Activated CD4-positive, alpha-beta memory T cell treated with anti-CD3 and anti-CD28 coated beads, Interleukin-2, amount 10 ng/mL, durations not matched to agents 7 days and 5 days (primary cell): ENCODE measurements at regions of chr2 and their contacts with region 1.

Region 1: DNA sequence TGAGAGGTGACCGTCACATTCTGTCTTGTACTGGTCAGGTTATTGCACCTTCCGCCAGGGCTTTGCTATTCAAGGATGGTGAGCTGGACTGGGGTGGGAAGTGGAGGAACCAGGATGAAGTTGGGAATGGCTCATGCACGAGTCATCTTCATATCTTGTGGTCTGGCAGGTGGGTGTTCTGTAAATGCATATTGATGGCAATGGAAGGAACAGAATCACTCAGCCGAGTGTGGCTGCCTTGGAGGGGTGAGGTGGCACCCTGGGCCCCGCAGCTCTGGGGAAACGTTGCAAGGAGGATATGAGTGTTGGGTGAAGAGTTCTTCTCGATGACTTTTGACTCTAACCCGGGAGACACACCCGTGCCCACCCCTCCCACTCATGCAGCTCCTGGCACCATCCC is 1.2 kb downstream of the NEU2 start:
- DNase-seq: no peak
- H3K4me3 Mint-ChIP-seq: no peak overlapping the region
- H3K27ac Mint-ChIP-seq: no peak overlapping the region
- H3K4me1 Mint-ChIP-seq: no peaks in the 10 kb centered on the region
- H3K27me3 Mint-ChIP-seq: no peaks in the 10 kb centered on the region

Region 2: DNA sequence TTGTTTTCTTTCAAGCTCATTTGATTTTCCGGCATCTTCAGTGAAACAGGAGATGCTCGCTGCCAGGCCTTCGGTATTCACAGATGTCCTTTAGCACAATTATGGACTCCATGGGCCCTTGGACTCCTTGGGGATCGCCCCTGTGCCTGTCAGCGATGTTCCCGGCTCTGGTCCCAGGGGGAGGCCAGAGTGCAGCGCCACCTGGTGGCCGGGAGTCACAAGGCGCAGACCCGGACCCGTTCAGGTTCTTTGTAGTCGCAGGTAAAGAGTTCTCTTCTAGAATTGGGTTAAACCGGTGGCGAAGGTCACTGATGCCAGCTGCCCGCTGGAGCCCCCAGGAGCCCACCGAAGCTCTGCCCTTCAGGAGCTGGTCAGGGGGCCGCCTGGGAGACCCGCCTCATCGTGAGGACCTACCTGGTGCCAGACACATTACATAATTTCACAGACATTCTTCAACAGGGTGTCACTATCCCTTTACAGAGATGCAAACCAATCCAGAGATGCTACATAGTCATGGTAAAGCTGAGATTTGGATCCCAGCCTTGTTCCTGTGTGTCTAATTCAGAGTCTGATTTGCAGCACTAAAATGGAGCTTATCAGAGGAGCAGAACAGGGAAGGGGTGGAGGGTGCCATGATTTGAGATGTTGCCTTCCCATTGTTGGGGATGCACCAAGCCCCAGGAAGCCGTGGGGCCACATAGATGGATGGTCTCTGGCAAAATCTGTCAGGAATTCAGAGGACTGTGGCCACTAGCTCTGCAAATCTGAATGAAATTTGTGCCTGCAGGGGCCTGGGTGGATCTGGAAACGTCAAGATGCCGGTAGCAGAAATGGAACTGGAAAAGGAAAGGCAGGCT is 20.5 kb after region 1 on chr2:
- CTCF ChIA-PET with region 1: interaction called, 19 read pairs
- POLR2A ChIA-PET with region 1: no interaction called
- DNase-seq: peak; percentile 74
- H3K4me3 Mint-ChIP-seq: no peak overlapping the region
- H3K27ac Mint-ChIP-seq: no peak overlapping the region
- H3K4me1 Mint-ChIP-seq: peaks cover 17% of the 10 kb centered on the region
- H3K27me3 Mint-ChIP-seq: peaks cover 25% of the 10 kb centered on the region